Stomach (tissue), 19 donors: ENCODE measurements at regions of chr1 and their contacts with region 1.

Region 1: GRCh38 chr1:223752721-223753515 is 40.6 kb downstream of the CAPN2 start:
- DNase-seq: no peak
- H3K4me3 ChIP-seq: no peak overlapping the region
- H3K27ac ChIP-seq: no peak overlapping the region
- H3K4me1 ChIP-seq: peaks cover 10 to 17% (median 13%) of the 10 kb centered on the region in 4 donors
- H3K27me3 ChIP-seq: no peaks in the 10 kb centered on the region
- CTCF ChIP-seq: no peak
- EP300 ChIP-seq: no peak
- POLR2A ChIP-seq: no peak

Region 2: GRCh38 chr1:223298701-223299100 is 454.2 kb before region 1 on chr1:
- intact Hi-C with region 1: no loop called
- DNase-seq: no peak
- H3K4me3 ChIP-seq: no peak overlapping the region
- H3K27ac ChIP-seq: no peak overlapping the region
- H3K4me1 ChIP-seq: peaks cover 0 to 5% (median 0%) of the 10 kb centered on the region in 4 donors
- H3K27me3 ChIP-seq: no peaks in the 10 kb centered on the region
- CTCF ChIP-seq: no peak
- EP300 ChIP-seq: no peak
- POLR2A ChIP-seq: no peak

Region 3: DNA sequence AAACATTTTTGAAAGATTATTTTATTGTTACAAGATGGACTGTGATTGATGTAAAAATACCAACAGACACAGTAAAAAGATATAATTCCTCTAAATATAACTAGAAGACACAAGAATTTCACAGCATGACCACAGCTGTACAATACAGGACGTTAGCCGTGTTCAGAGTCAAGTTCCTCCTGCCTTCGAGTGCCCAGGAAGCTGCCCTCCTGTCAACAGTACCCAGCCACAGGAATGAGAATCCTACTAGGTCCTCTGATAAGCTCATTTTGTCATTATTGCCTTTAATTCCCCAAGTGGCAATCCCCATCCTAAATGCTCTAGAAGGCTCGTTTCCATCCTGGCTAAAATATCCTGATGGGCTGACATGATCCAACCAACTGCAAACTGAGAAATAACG is 57.0 kb before region 1 on chr1:
- intact Hi-C with region 1: loop called (anchors 5 kb)
- DNase-seq: no peak
- H3K4me3 ChIP-seq: no peak overlapping the region
- H3K27ac ChIP-seq: no peak overlapping the region
- H3K4me1 ChIP-seq: peaks cover 5 to 23% (median 11%) of the 10 kb centered on the region in 4 donors
- H3K27me3 ChIP-seq: no peaks in the 10 kb centered on the region
- CTCF ChIP-seq: no peak
- EP300 ChIP-seq: no peak
- POLR2A ChIP-seq: no peak

Region 4: DNA sequence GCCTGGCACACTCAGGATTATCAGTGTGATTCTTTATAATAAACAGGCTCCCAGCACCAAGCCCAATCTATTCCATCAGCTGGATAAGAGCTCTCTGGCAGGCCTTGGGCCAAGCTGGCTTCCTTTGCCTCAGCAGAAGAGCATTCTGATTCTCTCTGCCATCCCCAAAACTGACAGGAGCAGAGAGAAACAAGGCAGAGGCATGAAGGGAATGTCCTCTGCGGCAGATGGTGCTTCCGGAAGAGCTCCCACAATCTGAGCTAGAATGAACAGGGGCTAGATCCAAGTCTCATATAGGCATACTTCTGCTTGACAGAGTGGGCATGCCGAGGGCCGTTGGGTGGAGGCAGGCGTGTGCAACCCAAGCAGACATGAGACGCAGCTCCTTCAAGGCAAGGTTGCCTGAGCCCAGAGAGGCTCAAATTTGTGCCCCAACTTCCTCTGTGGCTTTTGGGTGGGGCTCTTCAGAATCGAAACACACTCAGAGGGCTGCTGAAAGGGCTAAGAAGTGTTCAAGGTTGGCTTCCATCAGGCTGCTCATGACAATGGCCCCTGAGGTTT is 36.5 kb before region 1 on chr1:
- intact Hi-C with region 1: loop called (anchors 5 kb)
- DNase-seq: no peak
- H3K4me3 ChIP-seq: peak overlapping the region in 3 of 4 donors; percentile 2 to 68 (median 68)
- H3K27ac ChIP-seq: peak overlapping the region; percentile 48 to 100 (median 98)
- H3K4me1 ChIP-seq: peaks cover 82 to 91% (median 86%) of the 10 kb centered on the region in 4 donors
- H3K27me3 ChIP-seq: no peaks in the 10 kb centered on the region
- CTCF ChIP-seq: no peak
- EP300 ChIP-seq: no peak
- POLR2A ChIP-seq: no peak

Region 5: DNA sequence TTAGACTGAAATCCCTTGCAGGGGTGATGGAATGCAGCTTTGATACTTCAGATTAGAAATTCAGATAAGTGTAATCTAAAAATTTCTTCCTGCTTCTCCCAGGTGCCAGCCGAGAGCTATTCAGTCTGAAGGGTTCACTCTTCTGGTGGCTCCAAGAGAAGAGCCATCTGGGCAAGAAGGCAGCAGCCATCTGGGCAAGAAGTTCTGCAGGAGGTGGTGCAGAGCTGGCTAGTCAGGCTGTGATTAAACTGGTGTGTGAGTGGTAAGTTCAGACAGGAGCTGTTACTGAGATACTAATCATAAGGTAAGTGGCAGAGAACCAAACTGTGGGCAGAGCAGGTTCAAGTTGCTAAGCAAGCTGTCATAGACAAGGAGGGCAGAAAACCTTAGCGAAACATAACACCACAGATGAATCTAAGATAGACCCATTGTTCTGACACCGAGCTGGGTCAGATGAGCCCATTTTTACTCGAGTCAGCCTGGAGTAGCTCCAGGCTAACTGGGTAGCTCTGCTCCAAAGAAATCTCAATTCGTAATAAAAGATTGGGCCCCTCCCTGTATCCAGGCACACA is 107.2 kb after region 1 on chr1:
- intact Hi-C with region 1: no loop called
- DNase-seq: no peak
- H3K4me3 ChIP-seq: no peak overlapping the region
- H3K27ac ChIP-seq: no peak overlapping the region
- H3K4me1 ChIP-seq: peaks cover 0 to 4% (median 0%) of the 10 kb centered on the region in 4 donors
- H3K27me3 ChIP-seq: no peaks in the 10 kb centered on the region
- CTCF ChIP-seq: no peak
- EP300 ChIP-seq: no peak
- POLR2A ChIP-seq: no peak